ENCODE measurements at regions of chr4 and their contacts with region 1.

Region 1: DNA sequence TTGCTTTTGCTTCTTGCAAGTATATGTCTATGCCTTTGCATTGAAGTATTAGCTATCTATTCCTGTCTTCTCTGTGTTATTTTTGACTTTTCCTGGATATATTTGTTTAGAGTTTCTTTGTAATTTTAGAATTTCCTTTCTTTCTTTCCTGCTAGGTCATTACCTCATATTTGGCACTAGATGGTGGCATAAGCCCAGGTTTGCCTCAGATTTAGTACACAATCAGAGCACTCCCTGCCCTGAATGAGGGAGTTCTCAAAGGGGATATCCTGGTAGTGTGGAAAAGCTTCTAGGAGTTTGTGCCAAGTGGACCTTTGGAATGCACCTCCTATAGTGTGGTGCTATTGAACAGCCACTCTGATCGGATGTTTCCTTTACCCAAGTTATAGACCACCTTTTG is 181.6 kb downstream of the UGT8 start:
- DNase-seq: peak; percentile 55
- H3K4me3 ChIP-seq: no peak overlapping the region
- CTCF ChIP-seq: peak; percentile 56

Region 2: GRCh38 chr4:114698231-114698630 is 82.0 kb before region 1 on chr4:
- in situ Hi-C with region 1: no loop called
- DNase-seq: no peak
- H3K4me3 ChIP-seq: no peak overlapping the region
- CTCF ChIP-seq: no peak

Region 3: GRCh38 chr4:115537387-115537786 is 757.2 kb after region 1 on chr4:
- in situ Hi-C with region 1: loop called (anchors 5 kb)
- DNase-seq: peak; percentile 4
- H3K4me3 ChIP-seq: no peak overlapping the region
- CTCF ChIP-seq: no peak

Region 4: GRCh38 chr4:115596265-115597001 is 816.2 kb after region 1 on chr4:
- in situ Hi-C with region 1: no loop called
- DNase-seq: no peak
- H3K4me3 ChIP-seq: no peak overlapping the region
- CTCF ChIP-seq: no peak